ENCODE measurements at regions of chr10 and their contacts with region 1.

Region 1: GRCh38 chr10:74766501-74766900 is 59.9 kb upstream of the KAT6B start:
- DNase-seq: no peak
- ATAC-seq: no peak
- H3K4me3 ChIP-seq: no peak overlapping the region
- H3K27ac ChIP-seq: no peak overlapping the region
- H3K4me1 ChIP-seq: no peaks in the 10 kb centered on the region
- H3K27me3 ChIP-seq: no peaks in the 10 kb centered on the region
- CTCF ChIP-seq: no peak
- POLR2A ChIP-seq: no peak

Region 2: GRCh38 chr10:74677951-74678350 is 88.5 kb before region 1 on chr10:
- intact Hi-C with region 1: no loop called
- DNase-seq: no peak
- ATAC-seq: no peak
- H3K4me3 ChIP-seq: no peak overlapping the region
- H3K27ac ChIP-seq: no peak overlapping the region
- H3K4me1 ChIP-seq: peaks cover 0 to 5% (median 0%) of the 10 kb centered on the region in 12 donors
- H3K27me3 ChIP-seq: no peaks in the 10 kb centered on the region
- CTCF ChIP-seq: no peak
- POLR2A ChIP-seq: no peak

Region 3: DNA sequence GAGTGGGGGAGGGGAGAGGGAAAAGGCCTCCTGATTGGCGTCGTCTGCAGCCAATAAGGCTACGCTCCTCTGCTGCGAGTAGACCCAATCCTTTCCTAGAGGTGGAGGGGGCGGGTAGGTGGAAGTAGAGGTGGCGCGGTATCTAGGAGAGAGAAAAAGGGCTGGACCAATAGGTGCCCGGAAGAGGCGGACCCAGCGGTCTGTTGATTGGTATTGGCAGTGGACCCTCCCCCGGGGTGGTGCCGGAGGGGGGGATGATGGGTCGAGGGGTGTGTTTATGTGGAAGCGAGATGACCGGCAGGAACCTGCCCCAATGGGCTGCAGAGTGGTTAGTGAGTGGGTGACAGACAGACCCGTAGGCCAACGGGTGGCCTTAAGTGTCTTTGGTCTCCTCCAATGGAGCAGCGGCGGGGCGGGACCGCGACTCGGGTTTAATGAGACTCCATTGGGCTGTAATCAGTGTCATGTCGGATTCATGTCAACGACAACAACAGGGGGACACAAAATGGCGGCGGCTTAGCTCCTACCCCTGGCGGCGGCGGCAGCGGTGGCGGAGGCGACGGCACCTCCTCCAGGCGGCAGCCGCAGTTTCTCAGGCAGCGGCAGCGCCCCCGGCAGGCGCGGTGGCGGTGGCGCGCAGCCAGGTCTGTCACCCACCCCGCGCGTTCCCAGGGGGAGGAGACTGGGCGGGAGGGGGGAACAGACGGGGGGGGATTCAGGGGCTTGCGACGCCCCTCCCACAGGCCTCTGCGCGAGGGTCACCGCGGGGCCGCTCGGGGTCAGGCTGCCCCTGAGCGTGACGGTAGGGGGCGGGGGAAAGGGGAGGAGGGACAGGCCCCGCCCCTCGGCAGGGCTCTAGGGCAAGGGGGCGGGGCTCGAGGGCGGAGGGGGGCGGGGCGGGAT is 59.9 kb after region 1 on chr10 and contains the start of gene KAT6B:
- intact Hi-C with region 1: no loop called
- DNase-seq: peak; percentile 100
- ATAC-seq: peak; percentile 90 to 97 (median 95)
- H3K4me3 ChIP-seq: peak within 1 kb of the TSS; percentile 67 to 99 (median 92)
- H3K27ac ChIP-seq: peak within 1 kb of the TSS; percentile 93 to 100 (median 99)
- H3K4me1 ChIP-seq: peaks cover 0 to 55% (median 33%) of the 10 kb centered on the region in 12 donors
- H3K27me3 ChIP-seq: no peaks in the 10 kb centered on the region
- CTCF ChIP-seq: peak in 5 of 12 donors; percentile 11 to 44 (median 25)
- POLR2A ChIP-seq: peak in 1 of 2 donors; percentile 71
- total RNA-seq, gene KAT6B: 36.8 to 61.3 (median 46.9) TPM

Region 4: DNA sequence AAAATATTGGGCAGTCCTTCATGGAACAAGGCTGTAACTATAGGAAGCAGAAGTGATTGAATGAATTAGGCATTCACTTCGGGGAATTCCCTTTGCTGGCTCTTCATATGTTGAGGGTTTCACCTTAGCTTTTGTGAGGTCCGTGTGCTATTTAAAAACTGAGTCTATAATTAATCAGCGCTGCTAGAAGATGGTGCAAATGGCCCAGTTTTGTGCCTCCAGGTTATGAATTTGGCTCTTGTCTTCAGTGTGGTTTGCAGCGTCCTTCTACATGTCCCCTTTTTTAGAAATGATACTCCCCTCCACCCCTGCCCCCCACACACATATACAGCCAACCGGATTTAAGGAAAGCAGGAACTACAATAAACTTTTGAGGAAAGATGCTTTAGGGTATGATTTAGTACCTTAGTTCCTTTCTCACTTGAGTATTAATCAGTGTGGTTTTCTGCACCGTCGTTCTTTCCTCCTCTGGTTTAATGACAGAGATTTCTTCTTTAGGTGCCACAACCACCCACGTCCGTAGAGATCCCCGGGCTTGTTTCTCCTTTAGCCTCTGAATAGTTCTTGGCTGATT is 234.3 kb after region 1 on chr10:
- intact Hi-C with region 1: loop called in 1 of 10 experiments (anchors 10 kb)
- DNase-seq: no peak
- ATAC-seq: no peak
- H3K4me3 ChIP-seq: no peak overlapping the region
- H3K27ac ChIP-seq: no peak overlapping the region
- H3K4me1 ChIP-seq: no peaks in the 10 kb centered on the region
- H3K27me3 ChIP-seq: no peaks in the 10 kb centered on the region
- CTCF ChIP-seq: no peak
- POLR2A ChIP-seq: no peak

Region 5: GRCh38 chr10:75099952-75100763 is 333.7 kb after region 1 on chr10:
- intact Hi-C with region 1: no loop called
- DNase-seq: peak; percentile 80 to 92 (median 80)
- ATAC-seq: peak; percentile 71 to 86 (median 82)
- H3K4me3 ChIP-seq: peak overlapping the region in 6 of 12 donors; percentile 2 to 37 (median 8)
- H3K27ac ChIP-seq: peak overlapping the region in 9 of 12 donors; percentile 28 to 83 (median 74)
- H3K4me1 ChIP-seq: peaks cover 0 to 29% (median 10%) of the 10 kb centered on the region in 12 donors
- H3K27me3 ChIP-seq: no peaks in the 10 kb centered on the region
- CTCF ChIP-seq: peak; percentile 93 to 100 (median 99)
- POLR2A ChIP-seq: no peak

Measured in heart left ventricle (tissue), 16 donors.